Right cardiac atrium (tissue), 5 donors: ENCODE measurements at regions of chr6 and their contacts with region 1.

Region 1: GRCh38 chr6:81998432-81998831 is 246.0 kb upstream of the TENT5A start:
- DNase-seq: no peak
- ATAC-seq: no peak
- H3K4me3 ChIP-seq: no peak overlapping the region
- H3K27ac ChIP-seq: no peak overlapping the region
- H3K4me1 ChIP-seq: no peaks in the 10 kb centered on the region
- H3K27me3 ChIP-seq: no peaks in the 10 kb centered on the region

Region 2: DNA sequence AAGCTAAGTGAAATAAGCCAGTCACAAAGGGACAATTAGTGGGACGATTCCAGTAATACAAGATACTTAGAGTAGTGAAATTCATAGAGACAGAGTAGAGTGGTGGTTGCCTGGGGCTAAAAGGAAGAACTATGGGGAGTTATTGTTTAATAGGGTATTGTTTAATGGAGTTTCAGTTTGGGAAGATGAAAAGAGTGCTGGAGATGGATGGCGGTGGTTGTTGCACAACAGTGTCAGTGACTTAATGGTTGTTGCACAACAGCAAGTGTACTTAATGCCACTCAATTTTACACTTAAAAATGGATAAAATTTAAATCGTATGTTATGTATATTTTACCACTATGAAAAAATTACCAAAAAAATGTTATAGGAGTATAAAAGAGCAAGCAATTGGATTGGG is 36.2 kb before region 1 on chr6:
- intact Hi-C with region 1: loop called in 1 of 4 experiments (anchors 2 kb)
- DNase-seq: no peak
- ATAC-seq: no peak
- H3K4me3 ChIP-seq: no peak overlapping the region
- H3K27ac ChIP-seq: no peak overlapping the region
- H3K4me1 ChIP-seq: no peaks in the 10 kb centered on the region
- H3K27me3 ChIP-seq: no peaks in the 10 kb centered on the region